CD4-positive, alpha-beta T cell (primary cell): ENCODE measurements at regions of chr10 and their contacts with region 1.

Region 1: DNA sequence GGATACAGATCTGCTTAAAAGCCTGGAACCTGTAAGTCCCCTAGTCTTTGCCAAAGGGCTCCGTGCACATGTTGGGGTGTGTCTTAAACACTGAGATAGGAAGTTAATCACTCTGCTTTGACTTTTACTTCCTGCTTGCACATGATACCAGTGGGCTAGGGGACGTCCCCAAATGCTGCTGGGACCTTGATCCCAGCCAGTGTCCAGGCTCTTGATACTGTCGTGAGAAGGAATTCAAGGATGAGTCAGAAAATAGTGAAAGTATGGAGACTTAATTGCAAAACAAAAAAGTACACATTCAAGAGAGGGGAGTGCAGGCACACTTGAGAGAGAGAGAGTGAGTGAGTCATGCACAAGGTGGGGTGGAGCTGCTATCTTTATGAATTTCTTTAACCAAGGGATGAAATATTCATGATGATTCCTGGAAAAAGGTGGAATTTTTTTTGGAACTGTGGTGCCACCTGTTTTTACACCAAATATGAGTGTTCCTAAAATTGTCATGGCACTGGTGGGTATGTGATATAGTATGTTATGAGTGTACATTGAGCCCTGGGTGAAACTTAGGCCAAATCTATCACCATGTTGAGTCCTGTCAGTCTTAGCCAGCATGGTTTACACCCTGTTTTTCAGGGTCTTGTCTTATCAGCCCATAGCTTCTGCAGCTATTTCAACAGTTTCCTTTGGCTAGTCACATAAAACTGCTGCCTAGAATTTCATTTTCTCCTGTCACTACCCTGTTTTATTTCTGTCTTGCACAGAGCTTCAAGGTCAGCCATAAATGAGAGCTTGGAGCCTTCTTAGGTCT is 88.3 kb upstream of the CYP26C1 start:
- DNase-seq: peak in 2 of 14 experiments; percentile 1 to 23
- ATAC-seq: no peak
- H3K4me3 ChIP-seq: no peak overlapping the region
- H3K4me3 Mint-ChIP-seq: no peak overlapping the region
- H3K27ac ChIP-seq: no peak overlapping the region
- H3K27ac Mint-ChIP-seq: no peak overlapping the region
- H3K4me1 ChIP-seq: no peaks in the 10 kb centered on the region
- H3K4me1 Mint-ChIP-seq: no peaks in the 10 kb centered on the region
- H3K27me3 ChIP-seq: no peaks in the 10 kb centered on the region
- H3K27me3 Mint-ChIP-seq: no peaks in the 10 kb centered on the region
- CTCF ChIP-seq: no peak

Region 2: GRCh38 chr10:93039721-93040120 is 67.5 kb after region 1 on chr10:
- CTCF ChIA-PET with region 1: no interaction called
- POLR2A ChIA-PET with region 1: no interaction called
- intact Hi-C with region 1: loop called in 1 of 2 experiments (anchors 10 kb)
- DNase-seq: peak in 2 of 14 experiments; percentile 3 to 11
- ATAC-seq: no peak
- H3K4me3 ChIP-seq: no peak overlapping the region
- H3K4me3 Mint-ChIP-seq: no peak overlapping the region
- H3K27ac ChIP-seq: no peak overlapping the region
- H3K27ac Mint-ChIP-seq: no peak overlapping the region
- H3K4me1 ChIP-seq: no peaks in the 10 kb centered on the region
- H3K4me1 Mint-ChIP-seq: no peaks in the 10 kb centered on the region
- H3K27me3 ChIP-seq: no peaks in the 10 kb centered on the region
- H3K27me3 Mint-ChIP-seq: no peaks in the 10 kb centered on the region
- CTCF ChIP-seq: no peak